Activated CD4-positive, alpha-beta T cell treated with anti-CD3 and anti-CD28 coated beads, Interleukin-2, amount 10 ng/mL, durations not matched to agents 24 days and 14 days (primary cell): ENCODE measurements at regions of chr17 and their contacts with region 1.

Region 1: GRCh38 chr17:44331249-44331760 is 6.7 kb upstream of the SLC25A39 start:
- DNase-seq: peak; percentile 94
- H3K4me3 Mint-ChIP-seq: no peak overlapping the region
- H3K27ac Mint-ChIP-seq: no peak overlapping the region
- H3K4me1 Mint-ChIP-seq: peaks cover 12% of the 10 kb centered on the region
- H3K27me3 Mint-ChIP-seq: peaks cover 3% of the 10 kb centered on the region

Region 2: DNA sequence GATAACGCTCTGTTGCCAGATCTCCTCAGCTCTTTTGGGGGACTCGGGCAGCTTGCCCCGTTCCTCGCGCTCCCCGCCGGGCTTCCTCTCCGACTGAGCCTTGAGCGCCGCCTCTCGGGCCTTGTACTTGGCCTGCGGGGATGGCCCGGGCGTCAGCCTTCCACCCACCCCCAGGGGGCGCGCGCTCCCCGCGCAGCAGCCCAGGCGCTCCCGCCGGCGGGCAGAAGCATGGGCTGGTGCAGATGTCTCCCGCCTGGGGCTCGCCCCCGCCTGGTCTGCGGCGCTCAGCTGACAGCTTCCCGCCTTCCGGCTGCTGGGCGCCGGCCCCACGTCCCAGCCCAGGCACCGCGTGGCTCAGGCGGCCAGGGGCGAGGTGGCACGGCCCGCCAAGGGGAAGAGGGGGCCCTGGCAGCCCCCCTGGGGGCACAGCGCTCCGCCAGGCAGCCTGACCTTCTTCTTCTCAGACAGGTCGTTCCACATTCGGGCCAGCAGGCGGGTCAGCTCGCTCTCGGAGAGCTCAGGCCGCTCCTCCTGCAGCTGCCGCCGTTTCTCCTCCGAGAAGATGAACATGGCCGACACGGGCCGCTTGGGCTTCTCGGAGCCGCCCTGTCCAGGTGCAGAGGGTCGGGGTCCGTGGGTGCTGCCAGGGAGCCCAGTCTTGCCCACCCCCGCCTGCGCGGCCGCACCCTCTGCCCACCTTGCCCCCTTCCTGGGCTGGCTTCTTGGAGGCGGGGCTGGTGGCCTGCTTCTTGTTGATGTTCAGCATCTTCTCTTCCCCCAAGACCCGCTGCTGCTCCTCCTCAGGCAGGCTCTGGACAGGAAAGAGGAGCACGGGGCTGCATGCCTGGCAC is 120.7 kb before region 1 on chr17:
- intact Hi-C with region 1: loop called (anchors 1 kb)
- DNase-seq: peak; percentile 97
- H3K4me3 Mint-ChIP-seq: peak overlapping the region; percentile 85
- H3K27ac Mint-ChIP-seq: peak overlapping the region; percentile 87
- H3K4me1 Mint-ChIP-seq: peaks cover 42% of the 10 kb centered on the region
- H3K27me3 Mint-ChIP-seq: no peaks in the 10 kb centered on the region

Region 3: GRCh38 chr17:44344939-44345453 is 13.7 kb after region 1 on chr17 and contains the start of gene GRN:
- intact Hi-C with region 1: loop called (anchors 2 kb)
- DNase-seq: peak; percentile 96
- H3K4me3 Mint-ChIP-seq: peak within 1 kb of the TSS; percentile 92
- H3K27ac Mint-ChIP-seq: peak within 1 kb of the TSS; percentile 86
- H3K4me1 Mint-ChIP-seq: peaks cover 19% of the 10 kb centered on the region
- H3K27me3 Mint-ChIP-seq: peaks cover 13% of the 10 kb centered on the region
- total RNA-seq, gene GRN: 33.0 and 34.6 TPM in 2 replicates